Astrocyte of the cerebellum (primary cell): ENCODE measurements at regions of chr1 and their contacts with region 1.

Region 1: DNA sequence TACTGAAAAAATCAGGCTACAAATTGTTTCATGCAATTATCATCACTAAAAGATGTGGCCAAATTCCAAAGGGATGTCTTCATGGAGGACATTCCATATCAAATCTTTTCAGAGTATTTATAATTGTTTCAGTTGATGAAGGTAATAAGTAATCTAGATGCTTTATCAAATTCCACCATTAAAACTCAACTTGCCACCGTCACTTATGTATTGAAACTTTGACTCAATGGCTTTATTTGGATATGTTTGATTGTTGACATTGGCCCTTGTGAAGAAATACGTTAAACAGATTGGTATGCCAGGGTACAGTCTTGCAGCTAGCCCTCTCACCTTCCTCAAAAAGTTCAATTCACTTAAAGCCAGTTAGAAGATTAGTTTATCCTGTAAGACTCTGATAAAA is 32.2 kb upstream of the PALMD start:
- DNase-seq: no peak
- H3K4me3 ChIP-seq: no peak overlapping the region
- CTCF ChIP-seq: no peak

Region 2: DNA sequence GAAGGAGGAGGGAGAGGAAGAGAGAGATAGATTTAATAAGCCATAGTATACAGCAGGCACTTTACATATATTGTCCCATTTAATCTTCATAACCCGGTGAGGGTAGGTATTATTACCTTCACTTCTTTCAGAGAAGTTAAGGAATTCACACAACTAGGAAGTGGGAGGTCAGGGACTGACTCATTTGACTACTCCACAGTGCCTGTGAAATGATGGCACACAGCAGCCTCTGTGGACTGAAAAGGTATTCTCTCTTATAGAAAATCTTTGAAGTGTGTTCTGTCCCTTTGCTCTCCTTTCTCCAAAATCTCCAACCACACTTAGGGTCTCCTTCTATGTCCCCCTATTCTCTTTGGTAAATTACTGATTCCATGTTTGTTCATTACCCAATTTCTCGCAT is 56.1 kb after region 1 on chr1:
- in situ Hi-C with region 1: loop called (anchors 5 kb)
- DNase-seq: no peak
- H3K4me3 ChIP-seq: no peak overlapping the region
- CTCF ChIP-seq: no peak

Region 3: DNA sequence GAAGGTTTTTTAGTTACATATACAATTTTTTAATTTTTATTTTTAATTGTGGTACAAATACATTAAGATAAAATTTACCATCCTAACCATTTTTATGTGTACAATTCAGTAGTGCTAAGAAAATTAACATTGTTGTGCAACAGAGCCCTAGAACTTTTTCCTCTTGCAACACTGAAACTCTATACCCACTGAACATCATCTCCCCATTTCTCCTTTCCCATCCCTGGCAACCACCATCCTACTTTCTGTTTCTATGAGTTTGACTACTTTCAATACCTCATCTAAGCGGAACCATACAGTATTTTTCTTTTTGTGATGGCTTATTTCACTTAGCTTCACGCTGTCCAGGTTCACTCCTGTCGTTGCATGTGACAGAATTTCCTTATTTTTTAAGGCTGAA is 86.3 kb after region 1 on chr1:
- in situ Hi-C with region 1: no loop called
- DNase-seq: no peak
- H3K4me3 ChIP-seq: no peak overlapping the region
- CTCF ChIP-seq: no peak